ENCODE measurements at regions of chr16 and their contacts with region 1.

Region 1: DNA sequence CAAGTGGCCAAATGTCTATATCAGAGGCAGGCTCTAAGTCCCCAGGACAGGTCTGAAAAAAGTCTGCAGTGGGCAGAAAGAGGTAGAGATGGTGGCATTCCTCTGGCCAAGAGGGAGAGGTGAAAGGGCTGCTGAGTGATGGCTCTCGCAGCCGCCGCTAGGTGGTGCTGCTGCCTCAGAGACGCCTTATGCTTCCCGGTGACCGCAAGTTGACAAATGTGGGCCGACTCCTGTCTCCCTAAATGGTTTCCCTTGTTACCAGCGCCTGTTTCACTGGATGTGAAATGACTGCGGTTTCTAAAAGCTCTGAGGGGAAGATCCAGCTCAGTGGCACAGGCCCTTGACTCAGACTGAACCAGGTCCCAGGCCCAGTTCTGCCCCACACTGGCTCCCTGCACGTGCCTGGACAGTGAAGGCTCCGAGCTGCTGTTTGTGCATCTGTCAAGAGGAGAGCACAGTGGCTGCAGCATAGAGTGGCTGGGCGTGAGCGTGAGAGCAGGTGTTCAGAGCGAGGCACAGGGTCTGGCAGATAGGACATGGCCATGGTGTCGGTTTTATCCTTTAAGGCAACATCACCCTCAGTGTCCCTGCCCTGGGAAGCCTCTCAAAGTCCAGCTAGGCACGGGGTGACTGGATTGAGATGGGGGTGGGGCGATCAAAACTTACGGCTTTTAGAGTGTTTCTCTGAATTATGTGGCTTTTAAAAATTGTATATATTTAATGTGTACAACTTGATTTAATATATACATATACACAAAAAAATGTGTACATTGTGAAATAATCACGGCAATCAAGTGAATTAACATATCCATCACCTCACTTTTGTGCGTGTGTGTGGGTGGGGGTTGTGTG is 19.9 kb downstream of the CLEC16A start:
- DNase-seq: peak; percentile 85
- H3K4me3 Mint-ChIP-seq: peak overlapping the region; percentile 55
- H3K27ac Mint-ChIP-seq: peak overlapping the region; percentile 85
- H3K4me1 Mint-ChIP-seq: peaks cover 83% of the 10 kb centered on the region
- H3K27me3 Mint-ChIP-seq: no peaks in the 10 kb centered on the region

Region 2: GRCh38 chr16:10981697-10982216 is 17.5 kb after region 1 on chr16:
- CTCF ChIA-PET with region 1: interaction called, 22 read pairs
- POLR2A ChIA-PET with region 1: no interaction called
- DNase-seq: peak; percentile 65
- H3K4me3 Mint-ChIP-seq: peak overlapping the region; percentile 26
- H3K27ac Mint-ChIP-seq: peak overlapping the region; percentile 68
- H3K4me1 Mint-ChIP-seq: peaks cover 87% of the 10 kb centered on the region
- H3K27me3 Mint-ChIP-seq: no peaks in the 10 kb centered on the region

Region 3: DNA sequence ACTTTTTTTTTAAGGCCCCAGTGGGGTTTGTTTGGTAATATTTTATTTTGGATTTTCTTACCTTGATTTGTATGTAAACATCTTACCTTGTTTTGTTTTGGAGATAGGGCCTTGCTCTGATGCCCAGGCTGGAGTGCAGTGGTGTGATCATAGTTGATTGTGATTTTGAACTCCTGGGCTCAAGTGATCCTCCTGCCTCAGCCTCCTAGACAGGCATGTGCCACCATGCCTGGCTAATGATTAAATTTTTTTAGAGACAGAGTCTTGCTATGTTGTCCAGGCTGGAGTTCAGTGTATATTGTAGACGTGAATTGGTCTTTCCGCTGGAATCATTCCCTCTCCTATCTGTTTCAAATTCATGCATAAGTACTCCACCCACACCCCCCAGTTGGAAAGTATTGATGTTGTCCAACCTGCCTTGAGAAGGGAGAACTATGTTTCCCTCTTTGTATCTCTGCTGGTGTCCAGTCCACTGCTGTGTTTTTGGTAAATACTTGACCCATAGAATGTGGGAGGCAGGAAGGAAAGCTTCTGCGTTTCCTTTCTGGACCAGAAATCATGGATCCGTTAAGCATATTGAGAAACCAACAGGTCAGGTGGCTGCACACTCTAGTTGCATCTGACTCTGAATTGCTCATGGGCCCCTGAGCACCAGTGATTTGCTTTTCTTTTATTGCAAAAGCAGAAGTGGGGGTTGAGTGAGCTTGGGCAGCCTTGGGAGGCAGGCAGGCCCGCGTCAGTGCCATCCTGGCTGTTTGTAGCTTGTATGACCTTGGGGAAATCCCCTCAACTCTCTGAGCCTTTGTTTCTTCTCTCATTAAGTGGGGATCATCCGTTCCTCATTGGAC is 406.0 kb after region 1 on chr16:
- CTCF ChIA-PET with region 1: interaction called, 15 read pairs
- POLR2A ChIA-PET with region 1: no interaction called
- DNase-seq: no peak
- H3K4me3 Mint-ChIP-seq: no peak overlapping the region
- H3K27ac Mint-ChIP-seq: no peak overlapping the region
- H3K4me1 Mint-ChIP-seq: peaks cover 25% of the 10 kb centered on the region
- H3K27me3 Mint-ChIP-seq: no peaks in the 10 kb centered on the region

Region 4: GRCh38 chr16:11396241-11397048 is 432.2 kb after region 1 on chr16:
- CTCF ChIA-PET with region 1: interaction called, 17 read pairs
- POLR2A ChIA-PET with region 1: no interaction called
- DNase-seq: peak; percentile 68
- H3K4me3 Mint-ChIP-seq: no peak overlapping the region
- H3K27ac Mint-ChIP-seq: no peak overlapping the region
- H3K4me1 Mint-ChIP-seq: no peaks in the 10 kb centered on the region
- H3K27me3 Mint-ChIP-seq: no peaks in the 10 kb centered on the region